ENCODE measurements at regions of chr13 and their contacts with region 1.

Region 1: DNA sequence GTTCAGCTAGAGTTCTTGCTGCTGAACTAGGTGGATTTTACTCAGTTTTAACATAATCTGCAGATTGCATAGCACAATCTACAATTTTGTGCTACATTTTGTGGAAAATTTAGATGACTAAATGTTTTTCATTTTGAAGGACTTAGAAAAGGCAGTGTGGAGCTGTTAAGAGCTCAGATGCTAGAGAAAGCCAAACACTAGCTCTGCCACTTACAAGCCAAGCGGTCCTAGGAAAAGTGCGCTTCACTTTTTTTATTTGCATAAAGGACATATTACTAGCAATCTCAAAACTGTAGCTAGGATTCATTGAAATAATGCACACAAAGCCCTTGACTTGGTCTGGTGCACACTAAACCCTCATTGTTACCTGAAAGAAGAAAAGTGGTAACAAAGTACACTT is 8.1 kb upstream of the CSNK1A1L start:
- DNase-seq: no peak
- H3K4me3 ChIP-seq: no peak overlapping the region
- H3K27ac ChIP-seq: no peak overlapping the region
- H3K4me1 ChIP-seq: no peaks in the 10 kb centered on the region
- H3K27me3 ChIP-seq: no peaks in the 10 kb centered on the region
- CTCF ChIP-seq: no peak
- POLR2A ChIP-seq: no peak

Region 2: DNA sequence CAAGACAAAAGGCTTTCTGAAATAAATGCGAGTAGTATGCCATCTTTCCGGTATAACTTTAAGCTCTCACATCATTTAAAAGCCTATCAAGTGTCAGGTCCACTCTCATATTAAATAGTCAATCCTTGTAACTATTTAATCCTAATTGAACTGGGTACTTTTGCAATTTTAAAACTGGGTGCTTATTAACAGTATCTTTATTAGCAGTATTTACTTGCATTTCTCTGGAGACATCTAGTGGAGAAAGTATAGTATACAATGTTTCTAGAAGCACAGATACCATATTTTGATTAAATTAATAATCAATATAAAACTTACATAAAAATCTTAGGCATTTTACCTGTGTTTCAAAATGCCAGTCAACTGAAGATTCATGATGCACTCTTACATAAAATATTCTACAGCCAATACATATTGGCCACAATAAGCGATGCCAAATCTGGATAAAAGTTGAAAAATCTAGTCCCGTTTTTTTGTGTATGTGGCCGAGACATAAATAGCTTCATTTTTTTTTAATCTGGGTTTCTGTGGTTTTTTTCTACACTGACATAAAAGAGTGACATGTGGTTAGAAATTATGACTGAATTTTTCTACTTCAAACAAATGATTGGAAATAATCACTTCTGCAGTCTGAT is 489.3 kb after region 1 on chr13:
- intact Hi-C with region 1: loop called (anchors 5 kb)
- DNase-seq: no peak
- H3K4me3 ChIP-seq: no peak overlapping the region
- H3K27ac ChIP-seq: no peak overlapping the region
- H3K4me1 ChIP-seq: no peaks in the 10 kb centered on the region
- H3K27me3 ChIP-seq: no peaks in the 10 kb centered on the region
- CTCF ChIP-seq: peak; percentile 39 to 58 (median 52)
- POLR2A ChIP-seq: no peak

Measured in uterus (tissue), 4 donors.